ENCODE measurements at regions of chr12 and their contacts with region 1.

Region 1: GRCh38 chr12:53065975-53066931 is 12.9 kb downstream of the SPRYD3 start:
- DNase-seq: peak; percentile 86
- ATAC-seq: peak; percentile 44 to 71

Region 2: DNA sequence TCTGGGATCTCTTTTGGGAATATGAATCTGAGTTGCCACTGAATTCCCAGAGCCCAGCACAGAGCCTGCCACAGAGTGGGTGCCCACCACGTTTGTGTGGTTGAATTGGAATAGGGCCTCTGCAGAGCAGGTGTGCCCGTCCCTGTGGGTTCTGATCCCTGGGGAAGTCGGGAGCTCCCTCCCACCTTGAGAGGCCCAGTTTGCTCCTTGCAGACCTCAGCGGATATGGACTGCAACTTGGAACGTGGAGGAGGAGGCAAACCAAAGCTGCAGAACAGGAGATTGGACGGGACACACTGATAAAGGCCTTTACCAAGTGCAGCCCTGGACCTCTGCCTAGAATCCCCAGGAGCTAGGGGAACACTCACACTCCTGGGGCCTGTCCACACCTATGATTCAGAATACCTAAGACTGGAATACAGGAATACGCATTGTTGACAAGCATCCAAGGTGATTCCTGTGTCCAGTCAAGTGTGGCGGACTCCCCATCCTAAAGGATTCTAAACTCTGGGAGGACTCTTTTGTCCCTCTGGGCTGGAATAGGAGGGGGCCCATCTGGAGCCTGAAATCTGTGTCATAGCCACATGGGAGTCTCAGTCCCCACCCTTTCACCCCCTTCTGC is 291.5 kb before region 1 on chr12:
- intact Hi-C with region 1: no loop called
- DNase-seq: no peak
- ATAC-seq: peak in 1 of 2 donors; percentile 39

Region 3: DNA sequence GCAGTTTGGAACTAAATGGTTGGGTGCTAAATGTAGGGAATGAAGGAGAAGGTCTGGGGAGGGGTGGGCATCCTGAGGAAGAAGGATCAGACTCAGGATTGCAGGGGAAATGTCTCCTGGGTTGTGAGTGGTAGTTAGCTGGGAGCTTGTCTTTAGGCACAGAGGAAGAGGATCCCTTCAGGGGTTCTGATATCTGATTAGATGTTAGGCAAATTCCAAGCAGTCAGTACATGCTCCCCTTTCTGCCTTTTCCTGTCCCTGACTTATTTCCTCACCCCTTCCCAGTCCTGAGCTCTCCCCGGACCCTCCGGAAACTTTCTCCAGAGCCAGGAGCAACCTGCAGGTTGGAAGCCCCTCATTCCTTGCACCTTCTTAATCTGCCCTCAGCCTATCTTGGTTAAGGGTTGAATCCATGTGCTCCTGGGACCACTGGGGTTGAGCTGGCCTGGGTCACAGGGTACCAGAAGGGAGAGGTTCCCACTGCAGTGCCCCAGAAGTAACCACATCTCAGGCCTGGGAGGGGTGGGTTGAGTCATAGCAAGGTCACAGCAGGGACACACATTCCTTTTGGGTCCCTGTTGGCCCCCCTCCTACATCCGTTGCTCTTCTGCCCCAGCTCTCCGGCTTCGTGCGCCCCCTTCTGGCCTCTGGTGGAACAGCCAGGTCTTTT is 32.9 kb after region 1 on chr12:
- intact Hi-C with region 1: loop called in 1 of 2 experiments (anchors 2 kb)
- DNase-seq: peak; percentile 93
- ATAC-seq: peak; percentile 75 to 79

Region 4: GRCh38 chr12:53174881-53175491 is 108.7 kb after region 1 on chr12:
- intact Hi-C with region 1: no loop called
- DNase-seq: no peak
- ATAC-seq: peak in 1 of 2 donors; percentile 38

Region 5: DNA sequence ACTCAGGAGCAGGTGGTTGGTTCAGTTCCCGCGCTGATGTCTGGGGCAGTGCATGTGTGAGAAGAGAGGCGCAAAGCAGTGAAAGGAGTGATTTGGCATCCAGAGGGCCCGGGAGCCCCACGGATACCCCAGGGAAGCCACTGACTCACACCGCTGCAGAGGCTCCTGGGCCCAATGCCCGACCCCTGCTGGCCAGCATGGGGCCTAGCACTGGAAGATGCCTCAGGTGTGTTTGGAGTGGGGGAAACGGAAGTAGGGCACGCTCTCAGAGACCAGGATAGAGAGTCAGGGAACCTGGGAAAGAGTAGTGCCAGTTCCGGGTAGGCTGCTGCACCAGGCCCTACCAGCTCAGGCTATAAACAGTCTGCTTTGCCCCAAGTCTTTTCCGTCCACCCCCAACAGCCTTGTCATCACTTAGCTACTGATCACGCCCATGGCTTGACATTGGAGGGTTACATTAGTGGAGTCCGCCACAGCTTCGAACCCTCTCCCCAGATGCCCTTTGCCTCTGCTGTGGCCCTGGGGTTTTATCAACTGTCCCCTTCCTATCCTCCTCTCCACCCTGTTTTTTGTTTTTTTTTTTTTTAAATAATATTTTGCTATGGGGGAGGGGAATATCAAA is 124.0 kb after region 1 on chr12:
- intact Hi-C with region 1: loop called (anchors 5 kb)
- DNase-seq: peak; percentile 73
- ATAC-seq: peak; percentile 79 to 84

Region 6: DNA sequence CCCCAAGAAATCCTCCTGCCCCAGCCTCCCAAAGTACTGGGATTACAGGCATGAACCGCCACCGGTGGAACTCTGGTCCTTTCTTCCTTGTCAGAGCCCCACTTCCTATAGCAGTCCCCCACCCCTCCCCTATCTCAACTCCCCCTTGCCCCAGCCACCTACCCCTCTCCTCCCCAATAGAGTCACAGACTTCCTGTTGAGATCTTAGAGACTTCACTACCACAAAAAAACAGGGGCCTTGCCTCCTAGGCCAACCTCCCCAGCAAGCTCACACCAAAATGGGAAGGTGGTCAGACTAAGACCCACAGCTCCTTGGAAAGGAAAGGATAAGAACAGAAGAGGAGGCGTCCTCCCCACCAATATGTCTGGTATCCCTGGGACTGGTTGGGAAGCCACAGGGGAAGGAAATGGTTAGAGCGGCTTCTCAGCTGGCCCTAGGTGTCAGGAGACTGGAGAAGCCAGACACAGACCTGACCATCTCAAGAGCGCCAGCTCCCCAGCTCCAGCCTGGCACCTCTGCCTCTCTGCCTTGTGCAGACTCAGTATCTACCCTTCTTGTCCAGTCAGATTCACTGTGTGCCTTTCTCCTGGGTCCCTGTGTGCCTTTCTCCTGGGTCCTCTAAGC is 132.3 kb after region 1 on chr12:
- intact Hi-C with region 1: loop called (anchors 5 kb)
- DNase-seq: no peak
- ATAC-seq: no peak

Region 7: DNA sequence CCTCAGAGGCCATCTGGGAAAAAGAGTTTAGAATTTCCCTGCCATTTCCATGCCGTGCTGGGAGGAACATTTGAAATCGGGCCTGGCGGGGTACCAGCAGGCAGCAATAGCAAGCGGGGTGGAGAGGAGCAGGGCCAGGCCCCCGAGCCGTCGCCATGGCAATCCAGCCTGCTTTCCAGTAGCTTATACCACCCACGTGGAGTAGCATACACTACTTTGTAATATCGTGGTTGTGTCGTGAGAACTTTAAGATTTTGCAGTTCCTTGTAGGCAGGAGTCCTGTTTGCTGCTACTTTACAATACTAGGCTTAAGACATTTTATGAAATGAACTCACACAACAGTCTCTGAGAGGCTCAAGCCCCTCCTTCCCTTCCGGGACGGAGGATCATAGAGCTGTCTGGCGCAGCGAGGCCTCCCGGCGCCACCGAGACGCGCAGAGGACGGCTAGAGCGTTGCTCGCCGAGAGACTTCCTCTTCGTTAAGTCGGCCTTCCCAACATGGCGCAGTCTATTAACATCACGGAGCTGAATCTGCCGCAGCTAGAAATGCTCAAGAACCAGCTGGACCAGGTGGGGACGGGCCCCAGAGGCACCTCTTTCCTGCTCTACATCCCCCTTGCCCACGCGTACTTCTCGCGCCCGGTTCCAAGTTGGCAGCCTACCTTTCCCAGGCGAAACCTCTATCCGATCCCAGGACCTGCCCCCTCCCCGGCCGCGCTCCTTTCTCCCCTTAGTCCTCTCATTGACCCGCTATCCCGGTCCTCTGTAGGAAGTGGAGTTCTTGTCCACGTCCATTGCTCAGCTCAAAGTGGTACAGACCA is 229.0 kb after region 1 on chr12 and contains the start of gene PFDN5:
- intact Hi-C with region 1: loop called in 1 of 2 experiments (anchors 10 kb)
- DNase-seq: peak; percentile 93
- ATAC-seq: peak; percentile 91 to 93
- total RNA-seq, gene PFDN5: 345 to 377 TPM